H1 (cell line): ENCODE measurements at regions of chr4 and their contacts with region 1.

Region 1: DNA sequence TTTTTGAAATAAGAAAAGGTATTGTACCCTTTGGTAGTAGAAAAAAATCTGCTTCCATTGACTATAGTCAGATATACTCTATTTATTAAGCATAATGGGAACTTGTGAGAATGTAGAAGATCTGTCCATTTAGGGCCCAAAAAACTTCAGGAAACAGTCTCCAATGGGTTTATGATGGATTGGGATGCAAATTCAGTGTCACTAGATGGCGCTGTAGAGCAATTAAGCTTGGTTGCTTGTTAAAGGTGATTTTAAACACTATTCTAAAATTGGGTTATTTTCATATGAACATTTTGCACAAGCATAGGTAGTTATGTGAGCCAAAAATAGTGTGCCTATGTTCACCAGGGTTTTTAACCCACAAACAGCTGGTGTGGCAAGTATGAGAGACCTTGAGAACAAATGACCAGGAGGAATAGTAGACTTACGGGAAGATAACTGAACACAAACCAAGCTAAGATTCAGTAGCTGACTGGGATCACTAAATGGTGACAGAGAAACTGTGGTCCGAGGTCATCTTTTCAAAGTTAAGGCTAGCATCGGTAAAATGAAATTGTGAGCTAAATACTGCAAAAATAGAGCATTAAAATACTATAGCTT is 80.3 kb upstream of the LSM6 start:
- DNase-seq: peak; percentile 5 to 59
- H3K4me3 ChIP-seq: no peak overlapping the region
- H3K27ac ChIP-seq: no peak overlapping the region
- H3K4me1 ChIP-seq: no peaks in the 10 kb centered on the region
- H3K27me3 ChIP-seq: no peaks in the 10 kb centered on the region
- CTCF ChIP-seq: peak in 2 of 3 experiments; percentile 56 to 77; a peak in 3 of 4 replicates
- EP300 ChIP-seq: no peak
- POLR2A ChIP-seq: no peak
- RAD21 ChIP-seq: peak; percentile 59 to 65

Region 2: DNA sequence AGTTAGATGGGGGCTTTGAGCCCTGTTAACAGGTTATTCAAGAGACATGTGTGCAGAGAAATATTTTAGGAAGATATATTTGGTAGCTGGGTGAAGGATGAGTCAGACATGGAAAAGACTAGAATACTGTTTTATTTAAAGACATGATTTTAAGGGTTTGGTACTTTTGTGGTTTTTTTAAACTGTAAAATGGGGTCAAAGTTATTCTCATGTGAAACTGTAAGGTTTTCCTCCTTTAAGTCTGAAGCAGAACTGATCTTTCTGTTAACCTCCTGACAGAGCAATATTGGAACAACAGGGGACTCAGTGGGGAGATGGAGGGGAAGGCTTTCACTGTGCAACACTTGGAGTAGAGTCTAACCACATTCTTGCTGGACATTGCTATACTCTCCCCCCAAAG is 32.0 kb before region 1 on chr4:
- CTCF ChIA-PET with region 1: interaction called, 10 read pairs
- POLR2A ChIA-PET with region 1: no interaction called
- DNase-seq: no peak
- H3K4me3 ChIP-seq: no peak overlapping the region
- H3K27ac ChIP-seq: no peak overlapping the region
- H3K4me1 ChIP-seq: peaks cover 0 to 7% (median 1%) of the 10 kb centered on the region in 4 experiments; a peak in 1 of 7 replicates
- H3K27me3 ChIP-seq: no peaks in the 10 kb centered on the region
- CTCF ChIP-seq: no peak
- EP300 ChIP-seq: no peak
- POLR2A ChIP-seq: no peak
- RAD21 ChIP-seq: no peak

Region 3: GRCh38 chr4:146073517-146073916 is 21.7 kb before region 1 on chr4:
- CTCF ChIA-PET with region 1: interaction called, 14 read pairs
- POLR2A ChIA-PET with region 1: no interaction called
- DNase-seq: no peak
- H3K4me3 ChIP-seq: no peak overlapping the region
- H3K27ac ChIP-seq: no peak overlapping the region
- H3K4me1 ChIP-seq: no peaks in the 10 kb centered on the region
- H3K27me3 ChIP-seq: no peaks in the 10 kb centered on the region
- CTCF ChIP-seq: no peak
- EP300 ChIP-seq: no peak
- POLR2A ChIP-seq: no peak
- RAD21 ChIP-seq: no peak

Region 4: DNA sequence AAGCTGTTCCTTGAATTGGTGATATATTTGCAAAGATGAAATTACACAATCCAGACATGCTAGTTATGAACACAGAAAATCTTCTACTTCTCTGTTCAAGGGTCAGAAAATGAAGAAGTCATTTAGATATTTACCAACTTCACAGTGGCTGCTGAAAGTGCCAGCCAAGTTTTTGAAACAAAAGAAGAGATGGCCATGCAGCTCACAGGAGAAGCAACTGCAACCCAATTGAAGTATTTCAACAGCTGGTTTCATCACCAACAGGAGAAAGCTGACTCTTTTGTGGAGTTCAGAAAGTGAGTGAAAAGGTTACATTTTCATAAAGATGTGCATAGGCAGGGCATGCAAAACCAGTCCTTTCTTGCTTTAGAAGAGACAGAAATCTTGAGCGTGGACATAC is 10.3 kb after region 1 on chr4:
- CTCF ChIA-PET with region 1: interaction called, 68 read pairs
- POLR2A ChIA-PET with region 1: no interaction called
- DNase-seq: no peak
- H3K4me3 ChIP-seq: no peak overlapping the region
- H3K27ac ChIP-seq: no peak overlapping the region
- H3K4me1 ChIP-seq: no peaks in the 10 kb centered on the region
- H3K27me3 ChIP-seq: no peaks in the 10 kb centered on the region
- CTCF ChIP-seq: no peak
- EP300 ChIP-seq: no peak
- POLR2A ChIP-seq: no peak
- RAD21 ChIP-seq: no peak

Region 5: DNA sequence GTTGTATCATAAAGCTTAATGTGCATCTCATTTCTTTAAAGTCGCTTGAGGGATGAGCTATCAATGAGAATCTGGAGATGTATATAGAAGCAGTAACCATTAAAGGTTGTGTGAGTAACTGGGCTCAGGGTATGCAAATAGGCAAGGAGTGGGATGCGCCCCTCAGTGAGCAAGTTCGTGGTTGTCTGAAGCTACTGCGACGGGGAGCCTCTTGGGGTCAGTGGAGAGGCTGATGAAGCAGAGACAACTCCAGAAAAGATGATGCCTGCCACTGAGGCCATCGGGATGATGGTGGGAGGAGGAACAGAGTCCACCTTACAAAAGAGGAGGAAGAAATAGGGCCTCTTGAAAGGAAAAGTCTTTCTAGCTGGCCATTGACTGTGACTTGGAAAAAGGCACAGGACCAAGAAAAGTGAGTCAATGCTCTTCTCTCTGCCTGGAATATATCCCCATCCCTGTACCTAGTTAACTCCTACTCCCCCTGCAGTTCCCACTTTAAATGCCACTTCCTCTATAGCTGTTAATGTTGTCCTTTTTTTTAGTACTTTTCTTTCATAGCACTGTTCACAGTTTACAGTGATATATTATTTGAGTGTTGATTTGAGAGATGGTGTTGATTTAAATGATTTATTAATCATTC is 29.0 kb after region 1 on chr4:
- CTCF ChIA-PET with region 1: interaction called, 19 read pairs
- POLR2A ChIA-PET with region 1: no interaction called
- DNase-seq: peak; percentile 33 to 60
- H3K4me3 ChIP-seq: no peak overlapping the region
- H3K27ac ChIP-seq: no peak overlapping the region
- H3K4me1 ChIP-seq: no peaks in the 10 kb centered on the region
- H3K27me3 ChIP-seq: no peaks in the 10 kb centered on the region; a peak in 1 of 7 replicates
- CTCF ChIP-seq: peak; percentile 36 to 54 (median 39)
- EP300 ChIP-seq: no peak
- POLR2A ChIP-seq: no peak
- RAD21 ChIP-seq: peak; percentile 30 to 35; a peak in 3 of 4 replicates

Region 6: DNA sequence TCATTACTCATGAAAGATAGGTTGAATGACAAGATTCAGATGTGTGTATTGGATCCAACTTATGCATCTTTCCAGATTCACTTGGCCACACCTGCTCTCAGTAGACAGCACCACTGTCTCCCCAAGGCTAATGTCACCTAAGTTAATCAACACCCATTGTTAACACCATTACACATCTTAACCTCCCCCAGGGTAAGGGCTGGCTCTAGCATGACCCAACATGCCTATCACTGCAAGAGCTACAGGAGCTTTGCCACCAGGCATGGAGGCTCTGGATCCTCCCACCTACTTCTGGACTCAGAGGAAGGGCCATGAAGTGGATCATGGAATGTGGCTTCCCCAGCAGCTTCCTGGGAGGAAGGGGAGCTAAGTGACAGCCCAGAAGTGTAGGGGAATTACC is 47.6 kb after region 1 on chr4:
- CTCF ChIA-PET with region 1: no interaction called
- POLR2A ChIA-PET with region 1: no interaction called
- DNase-seq: no peak
- H3K4me3 ChIP-seq: no peak overlapping the region
- H3K27ac ChIP-seq: no peak overlapping the region
- H3K4me1 ChIP-seq: no peaks in the 10 kb centered on the region
- H3K27me3 ChIP-seq: no peaks in the 10 kb centered on the region
- CTCF ChIP-seq: no peak
- EP300 ChIP-seq: no peak
- POLR2A ChIP-seq: no peak
- RAD21 ChIP-seq: no peak